ENCODE measurements at regions of chr20 and their contacts with region 1.

Region 1: GRCh38 chr20:23361598-23362384 is at the start of gene GZF1:
- DNase-seq: peak; percentile 98
- H3K4me3 ChIP-seq: peak within 1 kb of the TSS; percentile 78 to 91
- H3K27ac ChIP-seq: peak within 1 kb of the TSS; percentile 97 to 98
- H3K4me1 ChIP-seq: peaks cover 8% of the 10 kb centered on the region
- H3K27me3 ChIP-seq: no peaks in the 10 kb centered on the region
- CTCF ChIP-seq: peak in 2 of 4 experiments; percentile 58 to 77
- POLR2A ChIP-seq: peak; percentile 94
- total RNA-seq, gene GZF1: 9.4 to 45.3 TPM

Region 2: DNA sequence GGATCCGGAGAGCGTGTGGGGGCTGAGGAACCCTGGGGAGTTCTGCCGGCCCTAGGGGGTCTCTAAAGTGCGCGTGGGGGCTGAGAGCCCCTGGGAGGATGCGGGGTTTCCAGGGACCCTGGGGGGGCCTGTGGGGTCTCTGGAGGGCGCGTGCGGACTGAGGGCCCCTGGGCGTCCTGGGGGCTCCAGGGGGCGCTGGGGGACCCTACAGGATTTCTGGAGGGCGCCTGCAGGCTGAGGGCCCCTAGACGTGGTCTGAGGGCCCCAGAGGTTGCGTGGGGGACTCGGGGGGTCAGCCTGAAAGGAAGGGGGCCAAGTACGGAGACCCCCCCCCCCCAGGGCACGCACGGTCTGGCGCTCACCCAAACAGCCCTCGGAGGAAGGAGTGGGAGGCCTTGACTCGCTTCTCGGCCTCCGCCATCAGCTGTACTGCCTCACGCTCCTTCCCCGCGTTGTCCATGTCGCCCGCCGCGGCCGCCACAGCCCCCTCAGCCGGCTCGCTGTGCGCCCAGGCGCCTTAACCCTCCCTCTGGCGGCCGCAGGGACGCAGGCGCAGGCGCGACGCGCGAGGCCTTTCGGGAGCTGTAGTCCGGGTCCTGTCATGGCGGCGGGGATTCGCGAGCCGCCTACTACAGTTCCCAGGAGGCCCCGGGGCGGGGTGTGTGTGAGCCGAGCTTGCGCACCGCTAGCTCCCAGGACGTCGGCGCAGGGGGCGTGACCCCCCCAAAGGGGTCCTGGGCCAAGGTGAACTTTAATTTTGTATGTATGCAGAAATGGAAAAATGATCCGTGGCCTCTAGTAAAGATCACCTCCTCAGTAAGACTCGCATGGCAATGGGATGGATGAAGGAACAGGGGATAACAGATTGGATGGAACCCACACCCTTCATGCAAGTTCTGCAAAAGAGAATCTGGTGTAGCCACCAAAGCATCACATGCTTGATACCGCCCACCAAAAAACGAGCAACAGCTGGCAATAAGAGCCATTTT is 59.4 kb after region 1 on chr20 and contains the start of gene NAPB:
- intact Hi-C with region 1: loop called (anchors 5 kb)
- DNase-seq: peak; percentile 93
- H3K4me3 ChIP-seq: peak within 1 kb of the TSS; percentile 83 to 86
- H3K27ac ChIP-seq: peak within 1 kb of the TSS; percentile 85 to 86
- H3K4me1 ChIP-seq: peaks cover 4% of the 10 kb centered on the region
- H3K27me3 ChIP-seq: no peaks in the 10 kb centered on the region
- CTCF ChIP-seq: peak; percentile 35 to 92 (median 62)
- POLR2A ChIP-seq: peak; percentile 95
- total RNA-seq, gene NAPB: 8.1 to 24.3 TPM

Region 3: DNA sequence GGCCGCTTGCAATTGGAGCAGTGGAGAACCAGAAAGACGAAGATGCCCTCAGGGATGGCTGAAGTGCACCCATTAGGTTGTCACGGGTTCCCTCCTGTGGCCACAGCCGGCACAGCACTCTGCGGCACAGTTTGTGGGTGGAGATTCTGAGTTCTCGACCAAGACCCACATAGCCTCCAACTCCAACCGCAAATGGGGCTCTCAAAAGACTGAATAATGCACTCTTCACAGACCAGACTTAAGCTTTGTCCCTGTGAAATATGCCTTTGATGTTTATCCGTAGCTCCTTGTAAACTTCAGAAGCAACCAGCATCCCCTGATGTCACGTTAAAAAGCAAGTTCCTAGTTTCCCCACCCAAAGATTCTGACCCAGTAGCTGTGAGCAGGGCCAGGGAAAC is 244.9 kb after region 1 on chr20:
- intact Hi-C with region 1: loop called (anchors 5 kb)
- DNase-seq: peak; percentile 74
- H3K4me3 ChIP-seq: no peak overlapping the region
- H3K27ac ChIP-seq: no peak overlapping the region
- H3K4me1 ChIP-seq: no peaks in the 10 kb centered on the region
- H3K27me3 ChIP-seq: no peaks in the 10 kb centered on the region
- CTCF ChIP-seq: peak; percentile 63 to 91 (median 86)
- POLR2A ChIP-seq: no peak

Region 4: DNA sequence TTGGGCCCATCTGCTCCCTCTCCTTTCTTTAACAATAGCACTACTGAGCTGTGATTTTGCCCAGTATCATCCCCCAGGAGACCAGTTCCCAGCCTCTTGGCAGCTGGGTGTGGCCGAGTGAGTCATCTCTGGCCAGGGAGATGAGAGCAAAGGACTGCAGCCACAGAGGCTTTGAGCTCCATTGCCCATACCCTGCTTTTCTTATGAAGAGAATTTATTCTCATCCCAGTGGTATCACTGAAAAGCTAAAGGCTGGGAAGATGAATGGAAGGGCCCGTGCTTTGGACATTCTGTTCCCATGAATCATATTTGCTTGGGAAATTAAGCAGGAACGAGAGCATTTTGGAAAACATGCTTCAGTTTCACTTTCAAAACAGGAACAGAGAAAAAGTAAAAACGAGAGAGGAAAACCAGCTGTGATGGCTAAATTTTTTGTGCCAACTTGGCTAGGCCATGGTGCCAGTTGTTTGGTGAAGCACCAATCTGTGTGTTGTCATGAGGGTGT is 261.1 kb after region 1 on chr20:
- intact Hi-C with region 1: loop called (anchors 5 kb)
- DNase-seq: no peak
- H3K4me3 ChIP-seq: peak overlapping the region in 1 of 2 donors; percentile 2
- H3K27ac ChIP-seq: peak overlapping the region; percentile 67 to 70
- H3K4me1 ChIP-seq: no peaks in the 10 kb centered on the region
- H3K27me3 ChIP-seq: no peaks in the 10 kb centered on the region
- CTCF ChIP-seq: no peak
- POLR2A ChIP-seq: no peak

Measured in prostate gland (tissue), 2 donors.